Heart right ventricle (tissue), 16 donors: ENCODE measurements at regions of chr15 and their contacts with region 1.

Region 1: DNA sequence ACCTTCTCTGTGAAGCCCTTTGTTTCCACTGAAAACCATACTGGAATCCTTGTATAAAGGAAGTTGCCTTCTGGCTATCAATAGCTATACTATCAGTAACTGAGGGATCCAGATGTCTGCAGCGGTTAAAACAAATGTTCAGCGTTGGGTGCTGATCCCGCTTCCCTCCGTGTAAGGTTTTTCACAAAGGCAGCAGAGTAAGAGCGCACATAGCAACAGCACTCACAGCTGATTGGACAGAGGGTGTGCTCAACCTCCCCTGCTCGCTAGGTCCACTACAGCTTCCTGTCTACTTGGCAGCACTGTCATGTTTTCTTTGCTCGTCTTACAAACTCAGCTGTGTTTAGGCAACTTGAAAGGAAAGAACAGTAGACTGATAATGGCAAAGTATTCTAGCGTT is 27.3 kb downstream of the ATOSA start:
- DNase-seq: peak; percentile 33 to 79
- ATAC-seq: peak; percentile 98 to 100 (median 99)
- H3K4me3 ChIP-seq: peak overlapping the region in 8 of 10 donors; percentile 12 to 50 (median 34)
- H3K27ac ChIP-seq: peak overlapping the region; percentile 20 to 77 (median 56)
- H3K4me1 ChIP-seq: peaks cover 2 to 74% (median 49%) of the 10 kb centered on the region in 9 donors
- H3K27me3 ChIP-seq: no peaks in the 10 kb centered on the region
- CTCF ChIP-seq: no peak

Region 2: GRCh38 chr15:52568601-52569256 is 83.1 kb before region 1 on chr15 and contains the start of gene ARPP19:
- intact Hi-C with region 1: loop called in 1 of 10 experiments (anchors 10 kb)
- DNase-seq: peak; percentile 86 to 90
- ATAC-seq: peak; percentile 89 to 94 (median 92)
- H3K4me3 ChIP-seq: peak within 1 kb of the TSS; percentile 45 to 92 (median 75)
- H3K27ac ChIP-seq: peak within 1 kb of the TSS; percentile 69 to 96 (median 93)
- H3K4me1 ChIP-seq: peaks cover 3 to 46% (median 41%) of the 10 kb centered on the region in 9 donors
- H3K27me3 ChIP-seq: no peaks in the 10 kb centered on the region
- CTCF ChIP-seq: peak in 5 of 9 donors; percentile 23 to 45 (median 40)
- total RNA-seq, gene ARPP19: 121 to 166 (median 147) TPM

Region 3: GRCh38 chr15:52679232-52680040 is 27.6 kb after region 1 on chr15 and contains the start of gene ATOSA:
- intact Hi-C with region 1: loop called in 2 of 10 experiments (anchors 2 kb)
- DNase-seq: peak; percentile 90 to 94
- ATAC-seq: peak; percentile 93 to 97 (median 95)
- H3K4me3 ChIP-seq: peak within 1 kb of the TSS; percentile 74 to 95 (median 89)
- H3K27ac ChIP-seq: peak within 1 kb of the TSS; percentile 95 to 99 (median 97)
- H3K4me1 ChIP-seq: peaks cover 0 to 50% (median 44%) of the 10 kb centered on the region in 9 donors
- H3K27me3 ChIP-seq: no peaks in the 10 kb centered on the region
- CTCF ChIP-seq: peak in 4 of 9 donors; percentile 4 to 21 (median 12)
- total RNA-seq, gene ATOSA: 18.9 to 36.4 (median 30.3) TPM